Posterior vena cava (tissue), 2 donors: ENCODE measurements at regions of chr15 and their contacts with region 1.

Region 1: DNA sequence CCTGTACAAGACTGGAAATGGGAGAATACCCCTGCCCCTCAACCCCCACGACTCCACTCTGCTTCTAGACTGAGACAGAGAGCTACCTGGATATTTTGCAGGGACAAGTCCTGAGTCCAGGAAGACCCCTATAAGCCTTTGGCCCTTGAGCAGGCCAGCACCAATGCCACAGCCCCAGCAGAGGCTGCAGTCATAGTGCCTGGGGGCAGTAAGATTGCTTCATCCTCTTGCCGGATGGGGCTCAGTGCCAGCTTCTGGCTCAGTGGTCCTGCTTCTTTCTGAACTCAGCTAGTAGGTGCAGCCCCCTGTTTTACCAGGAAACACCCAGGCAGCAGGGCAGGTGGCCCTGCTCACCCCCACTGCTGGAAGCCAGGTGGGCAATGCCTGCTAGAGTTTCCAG is 418.4 kb upstream of the MCTP2 start:
- DNase-seq: no peak

Region 2: DNA sequence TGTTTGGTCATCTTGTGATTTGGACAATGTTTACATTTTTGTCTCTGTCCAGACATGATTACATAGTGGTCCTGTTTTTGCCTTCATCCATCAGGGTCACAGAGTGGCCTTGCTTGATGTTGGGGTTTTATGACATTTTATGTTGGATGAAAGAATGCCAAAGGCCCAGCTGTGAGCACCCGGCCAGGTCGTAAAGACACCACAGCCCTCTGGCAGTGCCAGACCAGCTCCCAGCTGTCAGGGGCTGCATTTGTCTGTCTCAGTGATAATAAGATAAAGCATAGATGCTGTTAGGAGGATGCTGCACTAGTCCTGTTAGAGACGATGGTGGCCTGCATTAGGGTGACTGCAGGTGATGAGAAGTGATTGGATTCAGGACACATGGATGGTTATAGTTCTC is 1274.9 kb before region 1 on chr15:
- intact Hi-C with region 1: loop called in 1 of 2 experiments (anchors 5 kb)
- DNase-seq: no peak

Region 3: DNA sequence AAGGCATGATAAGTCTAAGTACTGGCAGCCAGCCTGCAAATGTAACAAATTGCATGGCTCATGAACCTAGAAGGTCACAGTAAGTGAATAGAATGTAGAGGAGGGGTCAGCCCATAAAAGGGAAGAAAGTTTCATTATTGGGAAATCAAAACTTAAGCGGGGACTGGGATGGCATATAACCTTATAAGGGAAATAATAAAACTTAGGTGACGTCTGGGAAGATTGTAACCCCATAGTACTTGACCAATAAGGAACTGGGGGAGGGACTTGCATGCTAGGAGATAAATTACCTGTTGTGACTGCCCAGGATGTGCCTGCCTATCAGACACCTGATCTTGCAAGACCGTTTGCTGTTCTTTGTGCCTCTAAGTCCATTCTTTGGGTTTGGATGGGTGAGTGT is 390.3 kb after region 1 on chr15:
- intact Hi-C with region 1: loop called in 1 of 2 experiments (anchors 5 kb)
- DNase-seq: no peak